ENCODE measurements at regions of chr1 and their contacts with region 1.

Region 1: GRCh38 chr1:185170291-185170848 is 13.4 kb downstream of the SWT1 start:
- DNase-seq: peak; percentile 54 to 86 (median 68)
- ATAC-seq: peak; percentile 98
- H3K4me3 ChIP-seq: no peak overlapping the region; the same call in 1 of the 2 replicates
- H3K27ac ChIP-seq: peak overlapping the region; percentile 28; the same call in 2 of the 3 replicates
- H3K4me1 ChIP-seq: no peaks in the 10 kb centered on the region; a peak in 1 of 5 replicates
- H3K27me3 ChIP-seq: no peaks in the 10 kb centered on the region
- CTCF ChIP-seq: peak; percentile 82 to 97 (median 82)
- EP300 ChIP-seq: no peak
- POLR2A ChIP-seq: no peak
- RAD21 ChIP-seq: peak; percentile 86 to 95

Region 2: GRCh38 chr1:184684285-184685074 is 485.9 kb before region 1 on chr1:
- CTCF ChIA-PET with region 1: no interaction called
- POLR2A ChIA-PET with region 1: no interaction called
- in situ Hi-C with region 1: no loop called
- intact Hi-C with region 1: loop called (anchors 5 kb)
- DNase-seq: no peak
- ATAC-seq: peak; percentile 13; the same call in 2 of the 3 replicates
- H3K4me3 ChIP-seq: no peak overlapping the region
- H3K27ac ChIP-seq: no peak overlapping the region
- H3K4me1 ChIP-seq: 0 out of 5 replicates have a peak, but pooled peaks cover 0 to 2% of the 10 kb centered on the region in 2 experiments
- H3K27me3 ChIP-seq: peaks cover 6 to 15% of the 10 kb centered on the region in 2 experiments; a peak in 4 of 5 replicates
- CTCF ChIP-seq: no peak
- EP300 ChIP-seq: no peak
- POLR2A ChIP-seq: no peak
- RAD21 ChIP-seq: no peak

Region 3: DNA sequence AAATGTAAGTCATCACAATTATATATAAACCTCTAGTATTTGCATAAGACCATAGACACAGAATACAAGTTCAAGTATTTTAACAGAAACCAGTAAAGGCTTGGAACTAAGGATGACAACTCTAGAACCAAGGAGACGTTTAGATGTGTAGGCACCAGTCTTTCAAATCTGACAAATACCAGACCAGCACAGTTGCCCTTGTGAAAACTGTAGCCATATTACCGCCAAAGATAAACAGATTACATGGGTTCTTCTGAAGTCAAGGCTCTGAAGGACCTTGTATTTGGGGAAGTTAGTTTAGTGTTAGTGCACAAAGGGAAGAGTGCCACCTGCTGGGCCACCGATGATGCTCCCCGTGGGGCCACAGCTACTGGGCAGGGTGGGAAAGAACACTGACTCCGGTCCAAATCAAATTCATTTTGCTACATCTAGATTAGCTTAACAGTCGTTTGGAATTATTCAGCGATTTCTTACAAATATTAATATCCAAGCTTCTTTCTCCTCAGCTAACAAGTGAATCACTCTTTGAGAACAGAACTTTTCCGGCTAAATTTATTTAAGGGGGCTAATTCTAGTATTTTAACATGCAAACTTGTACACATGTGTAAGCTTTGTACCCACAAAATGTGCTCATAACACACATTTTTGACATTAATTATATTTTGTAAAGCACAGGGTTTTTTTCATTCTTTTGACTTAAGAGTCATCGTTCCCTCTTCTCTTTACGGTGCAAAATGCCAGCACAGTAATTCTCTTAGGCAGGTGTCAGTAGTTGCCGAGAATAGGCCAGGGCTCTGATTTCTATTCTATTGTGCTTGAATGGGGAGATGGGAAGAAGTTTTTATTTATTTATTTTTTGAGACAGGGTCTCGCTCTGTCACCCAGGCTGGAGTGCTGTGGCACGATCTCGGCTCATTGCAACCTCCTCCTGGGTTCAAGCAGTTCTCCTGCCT is 188.1 kb before region 1 on chr1:
- CTCF ChIA-PET with region 1: interaction called, 19 read pairs
- POLR2A ChIA-PET with region 1: interaction called, 3 read pairs
- in situ Hi-C with region 1: no loop called
- intact Hi-C with region 1: loop called (anchors 1 kb)
- DNase-seq: peak; percentile 63 to 88 (median 74)
- ATAC-seq: peak; percentile 100
- H3K4me3 ChIP-seq: no peak overlapping the region
- H3K27ac ChIP-seq: no peak overlapping the region
- H3K4me1 ChIP-seq: peaks cover 0 to 2% of the 10 kb centered on the region in 2 experiments; a peak in 2 of 5 replicates
- H3K27me3 ChIP-seq: peaks cover 0 to 2% of the 10 kb centered on the region in 2 experiments; a peak in 1 of 5 replicates
- CTCF ChIP-seq: peak; percentile 91 to 98 (median 98)
- EP300 ChIP-seq: peak; percentile 60; the same call in 1 of the 2 replicates
- POLR2A ChIP-seq: no peak
- RAD21 ChIP-seq: peak; percentile 98 to 99

Region 4: DNA sequence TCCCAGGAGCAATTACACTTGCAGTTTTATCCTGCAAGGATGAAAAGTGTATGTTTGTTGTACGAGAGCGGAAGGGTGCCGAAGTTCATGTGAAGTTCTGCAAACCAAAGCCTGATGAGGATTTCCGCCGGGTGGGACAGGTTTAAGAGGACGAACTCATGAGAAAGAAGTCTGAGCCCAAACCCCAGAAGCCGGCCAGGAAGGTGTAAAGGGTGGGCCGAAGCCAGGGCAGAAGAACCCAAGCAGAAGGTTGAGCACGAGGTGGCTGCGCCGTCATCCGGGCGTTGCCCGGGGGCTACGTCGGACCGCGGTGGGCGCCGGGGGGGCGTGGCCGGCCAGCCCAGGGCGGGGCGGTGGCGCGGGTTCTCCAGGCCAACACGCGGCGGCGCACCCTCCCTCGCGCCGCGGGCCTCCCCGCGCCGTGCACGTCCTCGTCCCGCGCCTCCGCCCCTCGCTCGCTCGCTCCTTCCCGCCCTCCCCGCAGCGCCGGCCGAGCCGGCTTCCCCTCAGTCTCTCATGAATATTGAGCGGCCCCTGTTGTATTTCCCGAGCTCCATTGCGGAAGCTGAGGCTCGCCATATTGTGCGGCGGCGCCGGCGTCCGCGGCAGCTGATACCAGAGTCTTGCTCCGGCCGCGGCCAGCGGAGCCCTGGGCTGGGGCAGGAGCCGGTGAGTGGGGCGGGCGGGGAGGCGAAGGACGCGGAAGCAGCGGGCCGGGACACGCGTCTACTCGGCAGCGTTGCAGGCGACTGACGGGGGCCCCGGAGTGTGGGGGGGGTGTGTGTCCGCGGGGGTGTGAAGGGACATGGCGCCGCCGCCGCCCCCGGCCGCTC is 125.2 kb before region 1 on chr1 and contains the start of gene RNF2:
- CTCF ChIA-PET with region 1: interaction called, 3 read pairs
- POLR2A ChIA-PET with region 1: no interaction called
- in situ Hi-C with region 1: no loop called
- intact Hi-C with region 1: loop called (anchors 2 kb)
- DNase-seq: peak; percentile 92 to 94 (median 94)
- ATAC-seq: peak; percentile 94
- H3K4me3 ChIP-seq: peak within 1 kb of the TSS; percentile 85
- H3K27ac ChIP-seq: peak within 1 kb of the TSS; percentile 85
- H3K4me1 ChIP-seq: peaks cover 21 to 25% of the 10 kb centered on the region in 2 experiments
- H3K27me3 ChIP-seq: no peaks in the 10 kb centered on the region
- CTCF ChIP-seq: peak in 1 of 3 experiments; percentile 40; a peak in 1 of 6 replicates
- EP300 ChIP-seq: no peak
- POLR2A ChIP-seq: peak; percentile 79
- RAD21 ChIP-seq: peak in 1 of 2 experiments; percentile 45; a peak in 3 of 4 replicates
- polyA plus RNA-seq, gene RNF2: 7.1 to 7.9 TPM

Region 5: DNA sequence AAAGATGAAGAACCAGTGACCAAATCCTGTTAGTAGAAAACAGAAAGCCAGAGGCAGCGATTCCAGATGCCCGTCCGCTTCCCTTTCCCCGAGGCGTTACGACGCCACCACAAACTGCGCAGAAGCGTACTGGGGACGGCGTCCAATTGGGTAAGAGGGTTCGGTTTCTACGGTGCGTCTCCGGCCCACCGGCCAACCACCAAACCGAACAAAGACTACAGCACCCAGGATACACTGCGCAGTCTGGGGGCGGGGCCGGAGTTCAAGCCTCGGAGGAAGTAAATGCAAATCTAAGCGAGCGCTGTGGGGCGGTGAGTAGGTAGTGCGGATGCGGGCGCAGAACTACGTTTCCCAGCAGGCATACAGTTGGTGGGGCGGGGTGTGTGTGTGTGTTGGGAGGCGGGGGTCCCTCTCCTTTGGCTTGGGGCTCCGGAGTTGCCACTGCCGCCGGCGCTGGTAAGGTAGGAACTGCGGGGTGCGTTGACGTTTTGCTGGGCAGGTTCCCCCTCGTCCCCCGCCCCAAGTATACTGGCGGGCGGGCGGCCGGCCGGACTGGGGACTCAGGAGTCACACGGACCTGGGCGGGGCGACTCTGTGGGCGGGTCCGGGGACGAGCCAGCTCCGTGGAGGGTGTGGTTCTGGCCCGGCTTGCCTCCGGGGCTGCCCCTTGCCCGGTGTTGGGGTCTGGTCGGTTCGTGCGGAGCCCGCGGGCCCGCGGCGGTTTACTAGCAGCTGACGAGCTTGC is 13.3 kb before region 1 on chr1 and contains the starts of genes SWT1 and TRMT1L:
- CTCF ChIA-PET with region 1: no interaction called
- POLR2A ChIA-PET with region 1: interaction called, 12 read pairs
- in situ Hi-C with region 1: no loop called
- intact Hi-C with region 1: no loop called
- DNase-seq: peak; percentile 91 to 100 (median 93)
- ATAC-seq: peak; percentile 91
- H3K4me3 ChIP-seq: peak within 1 kb of the TSS; percentile 87
- H3K27ac ChIP-seq: peak within 1 kb of the TSS; percentile 88
- H3K4me1 ChIP-seq: peaks cover 10 to 23% of the 10 kb centered on the region in 2 experiments; a peak in 3 of 5 replicates
- H3K27me3 ChIP-seq: no peaks in the 10 kb centered on the region
- CTCF ChIP-seq: no peak
- EP300 ChIP-seq: no peak
- POLR2A ChIP-seq: peak; percentile 96
- RAD21 ChIP-seq: no peak
- polyA plus RNA-seq, gene SWT1: 1.5 to 2.3 TPM
- polyA plus RNA-seq, gene TRMT1L: 6.4 to 7.9 TPM

Region 6: DNA sequence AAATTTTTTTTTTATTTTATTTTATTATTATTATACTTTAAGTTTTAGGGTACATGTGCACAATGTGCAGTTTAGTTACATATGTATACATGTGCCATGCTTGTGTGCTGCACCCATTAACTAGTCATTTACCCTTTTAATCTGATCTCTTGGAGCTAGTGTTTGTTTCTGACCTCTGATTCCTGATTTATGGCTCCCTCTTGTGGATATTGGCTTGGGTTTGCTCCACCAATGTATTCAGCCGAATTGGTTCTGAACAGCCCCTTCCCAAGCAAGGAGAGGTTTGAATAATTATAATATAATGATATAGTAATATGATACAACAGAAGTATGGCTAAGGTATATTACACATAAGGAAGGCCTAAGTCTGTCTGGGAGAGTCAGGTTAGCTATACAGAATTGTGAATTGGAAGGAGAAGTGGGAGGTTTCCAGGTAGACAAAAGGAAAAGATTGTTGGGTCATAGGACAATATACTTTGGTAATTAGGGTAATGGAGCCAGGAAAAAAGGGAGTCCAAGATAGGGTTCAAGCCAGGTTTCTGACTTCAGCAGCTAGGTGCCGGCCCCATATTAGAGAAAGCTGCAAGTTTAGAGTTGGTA is 510.8 kb after region 1 on chr1:
- CTCF ChIA-PET with region 1: interaction called, 3 read pairs
- POLR2A ChIA-PET with region 1: interaction called, 6 read pairs
- in situ Hi-C with region 1: no loop called
- intact Hi-C with region 1: loop called (anchors 1 kb)
- DNase-seq: peak in 2 of 4 experiments; percentile 43 to 66
- ATAC-seq: peak; percentile 94
- H3K4me3 ChIP-seq: no peak overlapping the region
- H3K27ac ChIP-seq: no peak overlapping the region
- H3K4me1 ChIP-seq: no peaks in the 10 kb centered on the region
- H3K27me3 ChIP-seq: no peaks in the 10 kb centered on the region; a peak in 1 of 5 replicates
- CTCF ChIP-seq: peak; percentile 54 to 72 (median 60)
- EP300 ChIP-seq: no peak
- POLR2A ChIP-seq: no peak
- RAD21 ChIP-seq: peak; percentile 83 to 84